Activated T-helper 2 cell treated with anti-CD3 and anti-CD28 coated beads, Interferon-gamma antibody, Interleukin-2, Interleukin-4, amounts not matched to agents 10 μg/mL and 5 μg/mL and 100 μg/mL, durations not matched to agents 14 hours and 24 hours and 36 hours (primary cell): ENCODE measurements at regions of chr14 and their contacts with region 1.

Region 1: GRCh38 chr14:34331728-34332623 is 130.1 kb downstream of the SPTSSA start:
- DNase-seq: peak; percentile 32
- H3K4me3 Mint-ChIP-seq: no peak overlapping the region
- H3K27ac Mint-ChIP-seq: no peak overlapping the region
- H3K4me1 Mint-ChIP-seq: peaks cover 12% of the 10 kb centered on the region
- H3K27me3 Mint-ChIP-seq: peaks cover 5% of the 10 kb centered on the region

Region 2: DNA sequence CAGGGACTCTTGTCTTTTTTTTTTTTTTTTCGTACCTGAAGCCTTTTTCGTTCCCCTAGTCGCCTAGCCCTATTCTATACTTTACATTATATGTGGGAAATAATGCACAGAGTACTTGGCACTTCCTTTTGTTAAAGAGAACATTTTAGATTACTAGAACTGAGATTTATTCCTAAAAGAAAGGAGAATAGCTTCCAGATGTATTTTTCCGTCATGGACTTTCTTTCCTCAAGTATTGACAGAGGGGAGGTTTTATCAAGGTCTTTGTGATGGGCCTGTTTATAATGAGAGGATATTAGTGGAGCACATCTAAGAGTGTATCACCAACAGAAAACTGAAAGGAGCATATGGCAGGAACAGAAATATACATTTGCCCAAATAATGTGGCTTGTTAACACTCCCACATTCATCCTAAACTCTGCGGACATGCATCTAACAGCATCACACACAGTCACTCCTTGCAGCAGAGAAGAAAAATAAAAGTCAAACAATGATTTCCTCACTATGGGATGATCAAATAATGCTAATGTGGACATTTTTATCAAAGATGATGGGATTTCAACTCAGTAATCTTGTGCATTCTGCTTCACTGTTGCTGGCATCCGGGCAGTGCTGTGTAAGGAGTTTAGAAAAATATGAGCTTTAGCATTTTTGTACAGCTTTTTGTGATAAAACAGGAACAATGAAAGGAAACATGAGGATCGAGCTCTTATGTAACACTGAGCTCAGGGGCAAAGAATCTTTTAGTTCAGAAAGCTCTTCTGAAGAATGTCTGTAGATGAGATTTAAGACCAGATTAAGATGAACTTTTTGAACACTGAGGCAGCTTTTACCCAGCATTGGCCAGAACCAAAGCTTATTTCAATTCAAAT is 564.2 kb before region 1 on chr14:
- intact Hi-C with region 1: no loop called
- DNase-seq: no peak
- H3K4me3 Mint-ChIP-seq: no peak overlapping the region
- H3K27ac Mint-ChIP-seq: no peak overlapping the region
- H3K4me1 Mint-ChIP-seq: no peaks in the 10 kb centered on the region
- H3K27me3 Mint-ChIP-seq: peaks cover 14% of the 10 kb centered on the region

Region 3: GRCh38 chr14:34496679-34497513 is 164.9 kb after region 1 on chr14:
- intact Hi-C with region 1: loop called (anchors 5 kb)
- DNase-seq: no peak
- H3K4me3 Mint-ChIP-seq: no peak overlapping the region
- H3K27ac Mint-ChIP-seq: no peak overlapping the region
- H3K4me1 Mint-ChIP-seq: no peaks in the 10 kb centered on the region
- H3K27me3 Mint-ChIP-seq: no peaks in the 10 kb centered on the region